Left cardiac atrium (tissue), 4 donors: ENCODE measurements at regions of chr20 and their contacts with region 1.

Region 1: DNA sequence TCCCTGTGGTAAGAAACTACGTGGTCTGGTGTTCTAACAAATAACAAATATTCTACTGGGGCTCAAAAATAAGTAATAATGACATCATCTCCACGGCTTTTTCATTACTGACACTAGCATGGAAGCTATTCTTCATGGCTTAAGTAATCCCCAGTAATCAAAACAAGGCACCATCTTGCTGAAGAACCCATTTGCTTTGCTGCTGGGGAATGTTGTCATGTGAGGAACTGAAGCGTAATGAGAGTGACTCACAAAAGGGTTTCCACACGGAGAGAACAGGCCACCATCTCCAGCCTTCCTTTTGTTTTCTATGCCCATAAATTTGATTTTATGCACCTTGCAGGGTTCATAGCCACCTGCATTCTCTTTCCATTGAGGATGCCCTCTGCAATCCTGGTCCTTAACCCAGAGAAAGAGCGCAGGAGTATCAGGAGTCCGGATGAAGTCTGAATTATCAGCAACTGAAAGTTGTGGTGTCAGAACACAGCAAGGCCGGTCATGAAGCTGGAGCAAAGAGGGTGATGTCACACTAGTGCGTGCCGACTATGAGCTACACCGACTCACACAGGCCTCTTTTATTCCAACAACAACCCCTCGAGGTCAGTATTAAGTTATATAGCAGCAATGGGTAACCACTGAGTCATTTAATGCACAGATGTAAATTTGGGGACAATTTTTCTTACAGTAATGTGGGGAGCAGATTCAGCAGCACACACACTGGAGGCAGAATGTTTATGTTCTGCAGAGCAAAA is 173.7 kb upstream of the SSTR4 start:
- DNase-seq: no peak
- ATAC-seq: no peak

Region 2: DNA sequence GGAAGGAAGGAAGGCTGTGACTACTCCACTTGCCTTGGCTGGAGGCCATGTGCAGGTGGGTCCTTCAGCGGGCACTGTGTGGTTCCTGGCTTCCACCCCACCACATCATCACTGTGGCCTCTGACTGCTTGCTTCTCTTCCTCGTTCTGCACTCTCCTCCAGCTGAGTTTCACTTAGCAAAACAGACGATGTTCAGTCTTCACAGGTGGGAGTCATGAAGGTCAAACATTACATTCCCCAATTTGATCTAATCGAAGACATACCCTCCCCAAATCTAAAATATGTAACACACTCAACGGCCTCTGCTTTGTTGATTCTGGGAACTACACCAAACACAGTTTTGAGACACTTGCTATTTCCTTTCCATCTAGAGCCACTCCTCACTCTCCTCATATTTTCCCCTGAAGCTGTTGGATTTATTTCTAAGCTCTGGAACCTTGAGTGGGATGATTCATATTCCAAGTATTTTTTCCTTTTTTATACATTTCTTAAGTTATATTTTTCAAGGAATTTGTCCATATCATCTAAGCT is 144.5 kb before region 1 on chr20:
- intact Hi-C with region 1: loop called in 1 of 2 experiments (anchors 5 kb)
- DNase-seq: no peak
- ATAC-seq: peak in 1 of 2 donors; percentile 67

Region 3: DNA sequence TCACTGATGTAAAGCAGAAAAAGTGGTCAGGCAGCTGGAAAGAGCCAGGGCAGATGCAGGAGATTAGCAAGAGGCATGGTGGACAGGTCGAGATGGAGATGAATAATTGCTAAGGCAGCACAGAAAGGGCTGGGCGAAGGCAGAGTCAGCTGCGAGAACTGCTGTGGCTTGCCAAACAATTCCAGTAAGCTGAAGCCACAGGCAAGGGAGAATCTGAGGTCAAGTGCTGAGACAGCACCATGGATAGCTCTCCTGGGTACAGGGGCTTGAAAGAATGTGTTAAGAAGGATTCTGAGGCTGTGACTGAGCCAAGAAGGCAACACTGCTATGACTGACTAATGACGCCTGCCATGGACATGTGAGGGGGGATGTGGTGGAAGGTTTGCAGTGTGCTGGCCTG is 56.2 kb before region 1 on chr20:
- intact Hi-C with region 1: no loop called
- DNase-seq: peak; percentile 41
- ATAC-seq: peak; percentile 65 to 77

Region 4: GRCh38 chr20:22974353-22974752 is 112.9 kb after region 1 on chr20:
- intact Hi-C with region 1: loop called in 1 of 2 experiments (anchors 10 kb)
- DNase-seq: no peak
- ATAC-seq: no peak